Activated T-helper 1 cell treated with anti-CD3 and anti-CD28 coated beads, Interleukin-12 subunit alpha, Interleukin-12 subunit beta, Interleukin-2, Interleukin-4 antibody, amounts not matched to agents 30 ng/mL and 10 ng/mL and 1 ng/mL, durations not matched to agents 14 hours and 24 hours and 36 hours (primary cell): ENCODE measurements at regions of chr19 and their contacts with region 1.

Region 1: DNA sequence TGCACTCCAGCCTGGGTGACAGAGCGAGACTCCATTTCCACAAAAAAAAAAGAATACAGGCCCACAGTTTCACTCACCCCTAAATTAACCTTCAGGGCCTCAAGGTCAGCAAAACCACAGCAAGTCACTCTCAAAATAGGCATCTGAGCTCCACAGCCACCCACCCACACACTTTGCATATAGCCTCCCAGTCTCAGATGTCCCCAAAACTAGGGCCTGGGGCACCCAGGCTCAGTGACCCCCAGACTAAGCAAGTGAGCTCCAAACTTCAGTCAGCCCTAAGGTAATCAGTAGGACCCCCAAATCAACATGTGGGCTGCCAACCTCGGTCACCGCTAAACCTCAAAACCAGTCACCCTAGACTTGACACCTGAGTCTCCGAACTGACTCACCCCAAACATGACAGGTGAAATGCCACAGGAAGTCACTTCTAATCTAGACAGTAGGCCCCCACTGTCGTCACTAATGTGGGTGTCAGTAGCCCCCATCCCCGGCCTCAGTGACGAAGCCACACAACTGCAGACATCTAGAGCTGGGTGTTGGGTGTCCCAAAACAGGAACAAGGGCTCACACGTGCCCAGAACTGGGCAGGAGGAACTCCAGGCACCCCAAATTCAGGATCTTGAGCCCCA is 13.9 kb downstream of the RABAC1 start:
- DNase-seq: peak; percentile 70
- H3K4me3 Mint-ChIP-seq: peak overlapping the region; percentile 71
- H3K27ac Mint-ChIP-seq: peak overlapping the region; percentile 94
- H3K4me1 Mint-ChIP-seq: peaks cover 54% of the 10 kb centered on the region
- H3K27me3 Mint-ChIP-seq: peaks cover 7% of the 10 kb centered on the region

Region 2: DNA sequence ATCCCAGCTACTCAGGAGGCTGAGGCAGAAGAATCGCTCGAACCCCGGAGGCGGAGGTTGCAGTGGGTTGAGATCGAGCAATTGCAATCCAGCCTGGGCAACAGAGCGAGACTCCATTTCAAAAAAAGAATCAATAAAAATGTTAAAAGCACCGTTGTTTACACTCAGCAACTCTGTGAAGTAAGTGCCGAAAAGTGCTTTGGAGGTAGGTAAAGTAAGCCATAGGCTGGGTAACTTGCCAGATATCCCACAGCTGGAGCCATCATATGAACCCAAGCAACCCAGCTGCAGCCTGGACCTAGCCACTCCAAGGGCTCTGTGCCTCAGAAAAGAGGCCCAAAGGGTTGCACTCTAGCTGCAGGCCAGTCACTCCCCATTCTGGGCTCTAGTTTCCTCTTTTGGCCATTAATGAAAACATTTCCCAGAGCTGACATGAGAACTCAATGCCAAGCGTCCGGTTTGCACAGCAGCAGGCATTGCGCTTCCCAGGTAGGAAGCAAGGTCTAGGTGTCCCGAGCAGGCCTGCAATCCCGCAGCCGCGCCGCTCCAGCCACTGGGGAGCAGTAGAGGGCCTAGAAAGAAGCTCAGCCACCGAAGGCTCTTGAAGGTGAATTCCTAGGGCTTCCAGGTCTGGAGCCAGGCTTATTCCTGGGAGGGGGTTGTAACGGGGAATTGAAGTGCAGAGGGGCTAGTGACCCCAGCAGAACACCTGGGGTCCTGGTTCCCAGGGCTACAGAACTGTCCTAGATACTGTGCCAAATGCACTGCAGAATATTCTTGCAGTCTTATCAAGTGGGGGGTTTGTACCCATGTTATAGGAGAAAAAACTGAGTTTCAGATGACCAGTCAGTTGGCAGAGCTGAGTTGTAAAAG is 72.2 kb before region 1 on chr19:
- intact Hi-C with region 1: loop called (anchors 1 kb)
- DNase-seq: peak; percentile 49
- H3K4me3 Mint-ChIP-seq: peak overlapping the region; percentile 29
- H3K27ac Mint-ChIP-seq: peak overlapping the region; percentile 88
- H3K4me1 Mint-ChIP-seq: peaks cover 84% of the 10 kb centered on the region
- H3K27me3 Mint-ChIP-seq: no peaks in the 10 kb centered on the region

Region 3: DNA sequence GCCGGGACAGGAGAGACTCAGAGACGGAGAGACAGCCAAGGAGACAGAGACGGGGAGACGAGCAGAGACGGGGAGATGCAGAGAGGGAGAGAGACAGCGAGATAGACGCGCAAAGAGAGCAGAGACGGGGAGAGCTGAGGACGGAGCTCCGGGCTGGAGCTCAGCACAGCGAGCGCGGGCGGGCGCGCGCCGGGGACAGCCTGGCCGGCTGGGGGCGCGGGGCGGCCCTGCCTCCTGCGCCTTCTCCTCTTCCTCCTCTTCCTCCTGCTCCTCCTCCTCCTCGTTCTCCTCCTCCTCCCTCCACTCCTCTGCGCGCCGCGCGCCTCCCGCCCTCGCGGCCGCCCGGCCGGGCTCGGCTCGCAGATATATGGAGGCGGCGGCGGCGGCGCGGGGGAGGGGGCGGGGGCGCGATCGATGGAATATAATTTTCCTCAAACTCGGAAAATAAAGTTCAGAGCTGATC is 17.0 kb before region 1 on chr19 and contains the start of gene ERFL:
- intact Hi-C with region 1: loop called (anchors 1 kb)
- DNase-seq: no peak
- H3K4me3 Mint-ChIP-seq: peak within 1 kb of the TSS; percentile 88
- H3K27ac Mint-ChIP-seq: peak within 1 kb of the TSS; percentile 88
- H3K4me1 Mint-ChIP-seq: peaks cover 24% of the 10 kb centered on the region
- H3K27me3 Mint-ChIP-seq: peaks cover 4% of the 10 kb centered on the region
- total RNA-seq, gene ERFL: 3.1 TPM in 2 replicates